Heart right ventricle (tissue), 16 donors: ENCODE measurements at regions of chr19 and their contacts with region 1.

Region 1: GRCh38 chr19:45643024-45643926 is 4.1 kb upstream of the EML2 start:
- DNase-seq: peak; percentile 84 to 91
- ATAC-seq: peak; percentile 30 to 81 (median 58)
- H3K4me3 ChIP-seq: peak overlapping the region in 5 of 10 donors; percentile 51 to 57 (median 54)
- H3K27ac ChIP-seq: peak overlapping the region in 3 of 10 donors; percentile 74 to 88 (median 85)
- H3K4me1 ChIP-seq: peaks cover 4 to 61% (median 48%) of the 10 kb centered on the region in 9 donors
- H3K27me3 ChIP-seq: peaks cover 0 to 32% (median 0%) of the 10 kb centered on the region in 7 donors
- CTCF ChIP-seq: peak; percentile 94 to 99 (median 98)

Region 2: DNA sequence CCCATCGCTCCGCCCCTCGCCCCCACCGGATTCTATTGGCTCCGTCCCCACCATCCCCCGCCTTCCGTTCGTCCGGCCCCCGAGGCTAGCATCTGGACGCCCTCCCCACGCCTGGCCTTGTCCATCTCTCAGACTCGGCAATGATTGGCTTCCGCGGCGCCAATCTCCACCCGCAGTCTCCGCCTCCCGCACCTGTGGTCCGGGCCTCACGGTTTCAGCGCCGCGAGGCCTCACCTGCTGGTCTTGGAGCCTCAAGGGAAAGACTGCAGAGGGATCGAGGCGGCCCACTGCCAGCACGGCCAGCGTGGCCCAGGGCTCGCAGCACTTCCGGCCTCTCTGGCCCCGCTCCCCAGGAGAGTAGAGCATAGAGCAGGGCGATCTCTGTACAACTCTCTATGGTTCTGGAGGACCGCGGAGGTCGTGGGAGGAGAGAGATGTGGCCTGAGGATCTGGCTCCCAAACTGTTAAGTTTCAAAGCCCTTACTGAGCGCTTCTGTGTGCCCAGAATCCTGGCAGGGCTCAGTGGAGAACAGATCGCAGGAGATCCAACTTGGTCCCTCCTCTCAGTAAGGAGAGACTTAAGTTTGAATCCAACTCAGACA is 219.6 kb before region 1 on chr19 and contains the start of gene ERCC1:
- intact Hi-C with region 1: loop called in 1 of 10 experiments (anchors 10 kb)
- DNase-seq: peak; percentile 94 to 95
- ATAC-seq: peak; percentile 81 to 90 (median 86)
- H3K4me3 ChIP-seq: peak within 1 kb of the TSS; percentile 42 to 81 (median 72)
- H3K27ac ChIP-seq: peak within 1 kb of the TSS; percentile 34 to 96 (median 92)
- H3K4me1 ChIP-seq: peaks cover 4 to 68% (median 45%) of the 10 kb centered on the region in 9 donors
- H3K27me3 ChIP-seq: peaks cover 0 to 7% (median 0%) of the 10 kb centered on the region in 7 donors
- CTCF ChIP-seq: no peak
- total RNA-seq, gene ERCC1: 113 to 194 (median 136) TPM

Region 3: GRCh38 chr19:45496349-45496953 is 146.8 kb before region 1 on chr19:
- intact Hi-C with region 1: loop called in 3 of 10 experiments (anchors 10 kb)
- DNase-seq: peak in 1 of 2 donors; percentile 57
- ATAC-seq: peak; percentile 13 to 39 (median 30)
- H3K4me3 ChIP-seq: peak overlapping the region; percentile 44 to 86 (median 73)
- H3K27ac ChIP-seq: peak overlapping the region in 5 of 10 donors; percentile 19 to 68 (median 47)
- H3K4me1 ChIP-seq: peaks cover 10 to 66% (median 52%) of the 10 kb centered on the region in 9 donors
- H3K27me3 ChIP-seq: peaks cover 0 to 52% (median 24%) of the 10 kb centered on the region in 7 donors
- CTCF ChIP-seq: no peak

Region 4: GRCh38 chr19:45584332-45585157 is 58.7 kb before region 1 on chr19 and contains the start of gene OPA3:
- intact Hi-C with region 1: loop called in 3 of 10 experiments (anchors 10 kb)
- DNase-seq: peak; percentile 99 to 100
- ATAC-seq: peak; percentile 94 to 97 (median 96)
- H3K4me3 ChIP-seq: peak within 1 kb of the TSS; percentile 45 to 78 (median 66)
- H3K27ac ChIP-seq: peak within 1 kb of the TSS; percentile 84 to 99 (median 96)
- H3K4me1 ChIP-seq: peaks cover 0 to 21% (median 15%) of the 10 kb centered on the region in 9 donors
- H3K27me3 ChIP-seq: no peaks in the 10 kb centered on the region
- CTCF ChIP-seq: peak in 5 of 9 donors; percentile 11 to 43 (median 26)
- total RNA-seq, gene OPA3: 20.0 to 27.9 (median 24.2) TPM

Region 5: GRCh38 chr19:45691516-45692186 is 48.4 kb after region 1 on chr19 and contains the start of gene SNRPD2:
- intact Hi-C with region 1: no loop called
- DNase-seq: peak; percentile 92 to 93
- ATAC-seq: peak; percentile 81 to 95 (median 88)
- H3K4me3 ChIP-seq: peak within 1 kb of the TSS; percentile 65 to 96 (median 72)
- H3K27ac ChIP-seq: peak within 1 kb of the TSS; percentile 28 to 94 (median 87)
- H3K4me1 ChIP-seq: peaks cover 2 to 18% (median 15%) of the 10 kb centered on the region in 9 donors
- H3K27me3 ChIP-seq: no peaks in the 10 kb centered on the region
- CTCF ChIP-seq: peak in 2 of 9 donors; percentile 14 to 26
- total RNA-seq, gene SNRPD2: 216 to 268 (median 240) TPM

Region 6: GRCh38 chr19:45705115-45705514 is 61.8 kb after region 1 on chr19:
- intact Hi-C with region 1: no loop called
- DNase-seq: no peak
- ATAC-seq: no peak
- H3K4me3 ChIP-seq: no peak overlapping the region
- H3K27ac ChIP-seq: no peak overlapping the region
- H3K4me1 ChIP-seq: peaks cover 0 to 9% (median 0%) of the 10 kb centered on the region in 9 donors
- H3K27me3 ChIP-seq: no peaks in the 10 kb centered on the region
- CTCF ChIP-seq: no peak

Region 7: GRCh38 chr19:47243776-47244547 is 1600.7 kb after region 1 on chr19:
- intact Hi-C with region 1: loop called in 1 of 10 experiments (anchors 5 kb)
- DNase-seq: peak; percentile 91 to 94
- ATAC-seq: peak; percentile 92 to 96 (median 94)
- H3K4me3 ChIP-seq: peak overlapping the region in 8 of 10 donors; percentile 12 to 43 (median 34)
- H3K27ac ChIP-seq: peak overlapping the region in 8 of 10 donors; percentile 8 to 70 (median 50)
- H3K4me1 ChIP-seq: peaks cover 3 to 54% (median 39%) of the 10 kb centered on the region in 9 donors
- H3K27me3 ChIP-seq: peaks cover 0 to 40% (median 0%) of the 10 kb centered on the region in 7 donors
- CTCF ChIP-seq: peak; percentile 98 to 100 (median 99)